Heart left ventricle (tissue), 16 donors: ENCODE measurements at regions of chr10 and their contacts with region 1.

Region 1: GRCh38 chr10:119207367-119207668 is at the start of gene GRK5:
- DNase-seq: peak; percentile 95 to 98 (median 97)
- ATAC-seq: peak; percentile 89 to 97 (median 92)
- H3K4me3 ChIP-seq: peak within 1 kb of the TSS; percentile 74 to 100 (median 92)
- H3K27ac ChIP-seq: peak within 1 kb of the TSS; percentile 93 to 100 (median 98)
- H3K4me1 ChIP-seq: peaks cover 0 to 51% (median 32%) of the 10 kb centered on the region in 12 donors
- H3K27me3 ChIP-seq: no peaks in the 10 kb centered on the region
- CTCF ChIP-seq: no peak
- POLR2A ChIP-seq: peak in 1 of 2 donors; percentile 66
- total RNA-seq, gene GRK5: 17.0 to 58.0 (median 32.2) TPM

Region 2: DNA sequence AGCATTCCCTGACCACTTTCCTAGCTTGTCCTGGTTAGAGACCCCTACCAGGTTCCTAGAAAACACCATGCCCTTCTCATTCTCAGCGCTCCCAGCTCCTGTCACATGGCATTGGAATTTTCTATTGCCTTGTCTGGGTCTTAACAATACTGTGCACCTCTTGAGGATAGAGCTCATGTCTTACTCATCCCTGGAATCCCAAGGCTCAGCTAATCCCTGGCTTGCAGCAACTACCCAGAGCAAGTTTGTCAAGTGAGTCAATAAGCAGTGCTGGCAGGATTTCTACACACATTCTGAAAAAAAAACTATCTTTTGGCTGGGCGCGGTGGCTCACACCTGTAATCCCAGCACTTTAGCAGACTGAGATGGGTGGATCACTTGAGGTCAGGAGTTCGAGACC is 17.0 kb before region 1 on chr10:
- intact Hi-C with region 1: no loop called
- DNase-seq: no peak
- ATAC-seq: peak in 1 of 4 donors; percentile 26
- H3K4me3 ChIP-seq: no peak overlapping the region
- H3K27ac ChIP-seq: no peak overlapping the region
- H3K4me1 ChIP-seq: peaks cover 0 to 20% (median 0%) of the 10 kb centered on the region in 12 donors
- H3K27me3 ChIP-seq: no peaks in the 10 kb centered on the region
- CTCF ChIP-seq: no peak
- POLR2A ChIP-seq: no peak

Region 3: DNA sequence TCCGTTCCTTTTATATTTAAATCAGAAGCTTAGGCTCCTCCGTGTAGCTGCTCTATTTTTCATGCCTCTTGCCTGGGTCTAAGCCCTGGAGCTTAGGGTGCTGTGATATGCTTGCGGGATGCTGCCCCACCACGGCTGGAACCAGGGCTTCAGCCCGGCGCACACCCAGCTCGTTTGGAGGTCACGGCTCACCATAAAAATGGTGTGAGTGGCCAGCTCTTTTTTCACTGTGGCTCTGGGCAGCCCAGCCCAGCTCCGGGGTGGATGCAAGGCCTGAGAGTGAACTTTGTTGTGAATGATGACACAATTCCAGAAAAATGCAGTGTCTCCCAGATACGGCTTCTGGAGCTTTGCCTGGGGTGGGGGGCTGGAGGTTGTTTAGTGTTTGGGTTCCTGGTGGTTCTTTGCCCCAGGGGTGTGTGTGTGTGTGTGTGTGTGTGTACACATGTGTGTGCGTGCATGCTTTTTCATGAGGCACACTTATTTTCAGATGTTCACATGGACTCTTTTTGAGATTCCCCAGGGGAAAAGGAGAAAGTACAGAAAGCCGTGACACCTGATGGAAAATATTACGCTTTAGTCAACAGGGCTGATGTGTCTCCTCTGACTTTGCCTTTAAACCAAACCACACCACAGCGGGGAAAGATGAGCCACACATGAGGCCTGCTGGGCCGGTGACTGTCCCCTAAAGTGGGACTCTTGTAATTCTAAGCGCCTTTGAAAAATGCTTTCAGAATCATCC is 46.3 kb after region 1 on chr10:
- intact Hi-C with region 1: loop called in 6 of 10 experiments (anchors 2 to 5 kb)
- DNase-seq: peak; percentile 67 to 84 (median 78)
- ATAC-seq: peak; percentile 64 to 74 (median 70)
- H3K4me3 ChIP-seq: peak overlapping the region in 2 of 12 donors; percentile 7 to 19
- H3K27ac ChIP-seq: peak overlapping the region; percentile 67 to 94 (median 82)
- H3K4me1 ChIP-seq: peaks cover 18 to 85% (median 64%) of the 10 kb centered on the region in 12 donors
- H3K27me3 ChIP-seq: no peaks in the 10 kb centered on the region
- CTCF ChIP-seq: peak in 2 of 12 donors; percentile 7 to 27
- POLR2A ChIP-seq: no peak

Region 4: DNA sequence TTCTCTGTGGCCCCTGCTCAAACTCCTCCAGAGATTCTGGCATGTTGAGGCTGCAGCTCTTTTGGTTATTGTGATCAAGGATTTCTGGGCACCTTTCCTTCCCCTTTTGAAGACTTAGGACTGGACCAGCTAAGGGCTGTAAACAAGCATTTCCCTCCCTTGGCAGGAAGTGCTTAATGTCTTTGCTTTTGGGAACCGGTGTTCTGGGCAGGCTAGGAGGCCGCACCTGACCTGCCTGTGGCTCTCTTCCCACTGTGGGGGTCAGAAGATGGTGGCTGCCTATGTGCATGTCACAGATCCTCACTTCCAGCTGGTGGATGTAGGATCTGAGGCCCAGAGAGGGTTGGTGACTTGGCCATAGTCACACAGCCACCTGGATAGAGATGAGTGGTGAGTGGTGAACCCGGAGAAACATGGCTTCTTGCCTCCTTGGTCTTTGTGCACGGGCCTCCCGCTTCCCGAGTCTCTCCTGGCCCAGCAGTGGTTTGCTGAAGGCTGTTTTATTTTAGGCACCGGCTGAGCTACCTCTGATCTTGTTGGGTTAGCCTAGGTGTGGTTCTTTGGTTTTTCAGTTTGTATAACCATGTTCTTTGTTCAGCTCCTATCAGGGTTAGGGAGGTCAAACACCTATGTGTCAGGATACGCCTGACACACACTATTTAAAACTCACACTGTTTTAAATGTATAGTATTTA is 82.1 kb after region 1 on chr10:
- intact Hi-C with region 1: loop called in 1 of 10 experiments (anchors 5 kb)
- DNase-seq: peak in 2 of 5 donors; percentile 30 to 54
- ATAC-seq: peak in 1 of 4 donors; percentile 38
- H3K4me3 ChIP-seq: no peak overlapping the region
- H3K27ac ChIP-seq: peak overlapping the region; percentile 35 to 82 (median 58)
- H3K4me1 ChIP-seq: peaks cover 29 to 90% (median 67%) of the 10 kb centered on the region in 12 donors
- H3K27me3 ChIP-seq: no peaks in the 10 kb centered on the region
- CTCF ChIP-seq: no peak
- POLR2A ChIP-seq: no peak

Region 5: GRCh38 chr10:119320981-119321380 is 113.7 kb after region 1 on chr10:
- intact Hi-C with region 1: loop called in 1 of 10 experiments (anchors 5 kb)
- DNase-seq: no peak
- ATAC-seq: no peak
- H3K4me3 ChIP-seq: no peak overlapping the region
- H3K27ac ChIP-seq: no peak overlapping the region
- H3K4me1 ChIP-seq: peaks cover 9 to 82% (median 46%) of the 10 kb centered on the region in 12 donors
- H3K27me3 ChIP-seq: no peaks in the 10 kb centered on the region
- CTCF ChIP-seq: no peak
- POLR2A ChIP-seq: no peak

Region 6: GRCh38 chr10:119370111-119370741 is 162.9 kb after region 1 on chr10:
- intact Hi-C with region 1: loop called in 1 of 10 experiments (anchors 5 kb)
- DNase-seq: peak in 4 of 5 donors; percentile 66 to 73 (median 68)
- ATAC-seq: peak in 3 of 4 donors; percentile 47 to 73 (median 62)
- H3K4me3 ChIP-seq: peak overlapping the region in 7 of 12 donors; percentile 11 to 35 (median 21)
- H3K27ac ChIP-seq: peak overlapping the region; percentile 66 to 91 (median 84)
- H3K4me1 ChIP-seq: peaks cover 9 to 91% (median 62%) of the 10 kb centered on the region in 12 donors
- H3K27me3 ChIP-seq: no peaks in the 10 kb centered on the region
- CTCF ChIP-seq: no peak
- POLR2A ChIP-seq: no peak

Region 7: GRCh38 chr10:119445311-119445934 is 238.1 kb after region 1 on chr10:
- intact Hi-C with region 1: loop called in 2 of 10 experiments (anchors 2 kb)
- DNase-seq: peak; percentile 87 to 91 (median 90)
- ATAC-seq: peak; percentile 55 to 68 (median 66)
- H3K4me3 ChIP-seq: no peak overlapping the region
- H3K27ac ChIP-seq: peak overlapping the region in 7 of 12 donors; percentile 0 to 71 (median 35)
- H3K4me1 ChIP-seq: peaks cover 0 to 42% (median 18%) of the 10 kb centered on the region in 12 donors
- H3K27me3 ChIP-seq: no peaks in the 10 kb centered on the region
- CTCF ChIP-seq: peak; percentile 89 to 99 (median 97)
- POLR2A ChIP-seq: no peak